Activated B cell treated with CpG ODN at 0.5 μM for 24 hours (primary cell): ENCODE measurements at regions of chr11 and their contacts with region 1.

Region 1: DNA sequence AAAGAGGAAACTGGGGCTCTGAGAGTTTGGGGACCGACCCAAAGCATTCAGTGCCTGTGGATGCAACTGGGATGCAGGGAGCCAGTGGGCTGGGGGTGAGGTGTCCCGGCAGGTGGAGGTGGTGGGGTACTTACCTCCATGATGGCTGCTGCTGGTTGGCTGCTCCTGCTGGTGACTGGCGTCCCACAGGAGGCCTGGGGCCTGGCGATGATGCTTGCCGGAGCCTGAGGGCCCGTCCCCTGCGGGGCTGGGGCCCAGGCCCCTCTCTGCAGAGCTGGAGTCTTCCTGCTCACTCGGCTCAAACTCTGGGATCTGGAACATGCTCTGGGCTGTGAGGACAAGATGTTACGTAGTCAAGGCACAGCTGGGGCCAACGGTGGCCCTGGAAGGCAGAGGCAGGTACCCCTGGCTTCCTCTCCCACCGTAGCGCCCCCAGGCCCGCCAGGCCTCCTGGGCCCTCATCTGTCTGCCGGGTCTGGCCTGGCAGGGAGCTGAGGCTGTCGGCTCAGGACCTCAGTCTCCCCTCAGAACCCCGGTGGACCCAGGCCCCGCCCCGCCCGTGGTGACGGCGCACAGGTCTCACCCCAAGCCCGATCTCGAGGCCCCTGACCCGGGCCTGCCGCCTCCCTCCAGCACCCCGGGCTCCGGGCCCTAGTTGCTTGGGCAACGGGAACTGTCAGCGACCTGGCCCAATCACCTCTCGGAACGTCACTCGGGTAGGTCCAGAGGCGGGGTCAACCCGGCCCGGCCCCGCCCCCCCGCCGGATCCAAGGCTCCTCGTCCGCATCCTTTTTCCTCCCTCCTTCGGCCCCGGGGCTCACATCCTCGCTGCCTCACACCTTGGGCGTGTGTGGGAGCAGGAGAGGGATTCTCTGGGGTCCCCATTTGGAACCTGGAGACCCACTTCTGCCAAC is at the start of gene BAD:
- DNase-seq: peak; percentile 80
- ATAC-seq: peak; percentile 79
- H3K4me3 Mint-ChIP-seq: peak within 1 kb of the TSS; percentile 90
- H3K27ac Mint-ChIP-seq: peak within 1 kb of the TSS; percentile 92
- H3K4me1 Mint-ChIP-seq: peaks cover 20% of the 10 kb centered on the region
- H3K27me3 Mint-ChIP-seq: no peaks in the 10 kb centered on the region
- CTCF ChIP-seq: no peak
- total RNA-seq, gene BAD: 21.7 and 26.6 TPM in 2 replicates

Region 2: GRCh38 chr11:64225612-64226506 is 58.4 kb before region 1 on chr11 and contains the starts of genes NUDT22 and TRPT1:
- CTCF ChIA-PET with region 1: interaction called, 3 read pairs
- POLR2A ChIA-PET with region 1: interaction called, 5 read pairs
- intact Hi-C with region 1: loop called (anchors 1 kb)
- DNase-seq: peak; percentile 95
- ATAC-seq: peak; percentile 56
- H3K4me3 Mint-ChIP-seq: peak within 1 kb of the TSS; percentile 87
- H3K27ac Mint-ChIP-seq: peak within 1 kb of the TSS; percentile 81
- H3K4me1 Mint-ChIP-seq: peaks cover 39% of the 10 kb centered on the region
- H3K27me3 Mint-ChIP-seq: no peaks in the 10 kb centered on the region
- CTCF ChIP-seq: no peak
- total RNA-seq, gene NUDT22: 81.0 and 95.3 TPM in 2 replicates
- total RNA-seq, gene TRPT1: 50.6 and 51.3 TPM in 2 replicates

Region 3: GRCh38 chr11:64240394-64241174 is 43.7 kb before region 1 on chr11 and contains the start of gene FKBP2:
- CTCF ChIA-PET with region 1: no interaction called
- POLR2A ChIA-PET with region 1: interaction called, 11 read pairs
- intact Hi-C with region 1: loop called (anchors 1 kb)
- DNase-seq: peak; percentile 98
- ATAC-seq: peak; percentile 61
- H3K4me3 Mint-ChIP-seq: peak within 1 kb of the TSS; percentile 91
- H3K27ac Mint-ChIP-seq: peak within 1 kb of the TSS; percentile 98
- H3K4me1 Mint-ChIP-seq: peaks cover 75% of the 10 kb centered on the region
- H3K27me3 Mint-ChIP-seq: no peaks in the 10 kb centered on the region
- CTCF ChIP-seq: no peak
- total RNA-seq, gene FKBP2: 31.4 and 39.4 TPM in 2 replicates

Region 4: GRCh38 chr11:64246871-64247728 is 37.2 kb before region 1 on chr11 and contains the start of gene PPP1R14B:
- CTCF ChIA-PET with region 1: interaction called, 3 read pairs
- POLR2A ChIA-PET with region 1: interaction called, 5 read pairs
- intact Hi-C with region 1: loop called (anchors 1 kb)
- DNase-seq: peak; percentile 78
- ATAC-seq: peak; percentile 63
- H3K4me3 Mint-ChIP-seq: peak within 1 kb of the TSS; percentile 90
- H3K27ac Mint-ChIP-seq: peak within 1 kb of the TSS; percentile 87
- H3K4me1 Mint-ChIP-seq: peaks cover 43% of the 10 kb centered on the region
- H3K27me3 Mint-ChIP-seq: no peaks in the 10 kb centered on the region
- CTCF ChIP-seq: no peak
- total RNA-seq, gene PPP1R14B: 112 and 127 TPM in 2 replicates

Region 5: DNA sequence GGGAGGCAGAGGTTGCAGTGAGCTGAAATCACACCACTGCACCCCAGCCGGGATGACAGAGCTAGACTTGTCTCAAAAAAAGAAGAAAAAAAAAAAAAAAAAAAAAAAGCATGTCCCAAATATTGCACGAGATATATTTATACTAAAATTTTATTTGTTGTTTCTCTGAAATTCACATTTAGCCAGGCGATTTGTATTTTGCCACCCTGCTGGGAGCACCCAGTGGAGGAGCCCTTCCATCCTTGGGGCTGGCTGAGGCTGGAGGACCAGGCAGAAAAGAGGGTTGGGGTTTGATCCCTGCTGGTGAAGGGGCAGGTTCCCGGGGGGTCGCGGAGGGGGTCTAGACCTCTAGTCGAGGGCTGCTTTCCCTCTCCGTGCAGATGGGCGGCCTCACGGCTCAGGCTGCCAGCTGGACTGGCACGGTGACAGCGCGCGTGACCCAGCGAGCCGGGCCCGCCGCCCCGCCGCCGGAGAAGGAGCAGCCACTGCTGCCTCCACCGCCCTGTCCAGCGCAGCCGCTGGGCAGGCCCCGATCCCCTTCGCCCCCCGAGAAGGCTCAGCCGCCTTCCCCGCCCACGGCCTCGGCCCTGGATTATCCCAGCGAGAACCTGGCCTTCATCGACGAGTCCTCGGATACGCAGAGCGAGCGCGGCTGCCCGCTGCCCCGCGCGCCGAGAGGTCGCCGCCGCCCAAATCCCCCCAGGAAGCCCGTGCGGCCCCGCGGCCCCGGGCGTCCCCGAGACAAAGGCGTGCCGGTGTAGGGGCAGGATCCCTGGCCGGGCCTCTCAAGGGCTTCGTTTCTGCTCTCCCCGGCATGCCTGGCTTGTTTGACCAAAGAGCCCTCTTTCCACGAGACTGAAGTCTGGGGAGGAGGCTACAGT is 14.9 kb after region 1 on chr11:
- CTCF ChIA-PET with region 1: interaction called, 11 read pairs
- POLR2A ChIA-PET with region 1: interaction called, 24 read pairs
- intact Hi-C with region 1: loop called (anchors 1 kb)
- DNase-seq: peak; percentile 31
- ATAC-seq: no peak
- H3K4me3 Mint-ChIP-seq: peak overlapping the region; percentile 53
- H3K27ac Mint-ChIP-seq: no peak overlapping the region
- H3K4me1 Mint-ChIP-seq: peaks cover 26% of the 10 kb centered on the region
- H3K27me3 Mint-ChIP-seq: peaks cover 46% of the 10 kb centered on the region
- CTCF ChIP-seq: no peak